Ascending aorta (tissue), 2 donors: ENCODE measurements at regions of chr6 and their contacts with region 1.

Region 1: DNA sequence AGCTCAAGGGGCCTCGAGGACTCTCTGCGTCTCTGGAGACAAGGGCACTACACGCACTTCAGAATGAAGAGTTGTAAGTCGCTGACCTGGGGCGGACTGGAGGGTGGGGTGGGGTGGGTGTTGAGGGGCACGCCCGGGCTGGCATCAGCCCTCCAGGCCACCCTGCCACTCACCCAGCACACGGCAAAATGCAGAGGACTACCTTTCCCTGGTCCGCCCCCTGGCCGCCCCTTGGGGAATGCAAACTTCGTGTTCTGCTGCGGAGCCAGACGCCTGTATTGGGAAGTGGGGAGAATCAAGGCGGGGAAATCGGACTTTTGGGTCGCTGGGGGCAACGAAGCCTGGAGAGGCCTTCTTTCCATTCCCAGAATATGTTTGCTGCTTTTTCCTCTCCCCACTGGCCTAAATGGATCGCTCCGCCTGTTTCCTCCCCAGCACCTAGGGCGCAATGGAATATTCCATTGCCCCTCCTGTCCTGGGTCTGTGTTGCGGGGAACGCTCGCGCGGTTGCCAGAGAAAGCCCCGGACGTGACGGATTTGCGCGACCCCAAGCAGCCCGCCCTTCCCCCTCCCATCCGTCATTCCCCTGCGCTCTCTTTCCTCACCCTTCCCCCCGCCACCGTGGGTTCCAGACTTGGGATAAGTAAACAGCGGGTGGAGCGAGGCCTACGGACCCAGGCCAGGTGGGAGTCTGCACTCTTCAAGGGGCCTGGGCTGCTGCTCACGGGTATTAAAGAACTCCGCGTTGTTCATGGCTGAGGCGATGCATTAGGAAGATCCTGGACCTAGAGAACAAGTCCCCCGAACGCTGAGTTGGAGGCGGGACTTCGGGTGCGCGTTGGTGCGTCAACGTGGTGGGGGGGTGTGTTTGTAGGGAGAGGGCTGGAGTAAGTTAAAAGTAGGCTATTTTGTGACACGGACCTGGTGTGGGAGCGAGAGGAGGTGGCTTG is at the start of gene PPT2:
- DNase-seq: peak; percentile 70 to 96
- H3K4me3 ChIP-seq: peak within 1 kb of the TSS; percentile 79 to 86
- H3K27ac ChIP-seq: peak within 1 kb of the TSS; percentile 90 to 96
- H3K4me1 ChIP-seq: peaks cover 12 to 27% of the 10 kb centered on the region in 2 donors
- H3K27me3 ChIP-seq: no peaks in the 10 kb centered on the region
- CTCF ChIP-seq: peak in 1 of 3 experiments; percentile 21
- total RNA-seq, gene PPT2: 839 TPM

Region 2: DNA sequence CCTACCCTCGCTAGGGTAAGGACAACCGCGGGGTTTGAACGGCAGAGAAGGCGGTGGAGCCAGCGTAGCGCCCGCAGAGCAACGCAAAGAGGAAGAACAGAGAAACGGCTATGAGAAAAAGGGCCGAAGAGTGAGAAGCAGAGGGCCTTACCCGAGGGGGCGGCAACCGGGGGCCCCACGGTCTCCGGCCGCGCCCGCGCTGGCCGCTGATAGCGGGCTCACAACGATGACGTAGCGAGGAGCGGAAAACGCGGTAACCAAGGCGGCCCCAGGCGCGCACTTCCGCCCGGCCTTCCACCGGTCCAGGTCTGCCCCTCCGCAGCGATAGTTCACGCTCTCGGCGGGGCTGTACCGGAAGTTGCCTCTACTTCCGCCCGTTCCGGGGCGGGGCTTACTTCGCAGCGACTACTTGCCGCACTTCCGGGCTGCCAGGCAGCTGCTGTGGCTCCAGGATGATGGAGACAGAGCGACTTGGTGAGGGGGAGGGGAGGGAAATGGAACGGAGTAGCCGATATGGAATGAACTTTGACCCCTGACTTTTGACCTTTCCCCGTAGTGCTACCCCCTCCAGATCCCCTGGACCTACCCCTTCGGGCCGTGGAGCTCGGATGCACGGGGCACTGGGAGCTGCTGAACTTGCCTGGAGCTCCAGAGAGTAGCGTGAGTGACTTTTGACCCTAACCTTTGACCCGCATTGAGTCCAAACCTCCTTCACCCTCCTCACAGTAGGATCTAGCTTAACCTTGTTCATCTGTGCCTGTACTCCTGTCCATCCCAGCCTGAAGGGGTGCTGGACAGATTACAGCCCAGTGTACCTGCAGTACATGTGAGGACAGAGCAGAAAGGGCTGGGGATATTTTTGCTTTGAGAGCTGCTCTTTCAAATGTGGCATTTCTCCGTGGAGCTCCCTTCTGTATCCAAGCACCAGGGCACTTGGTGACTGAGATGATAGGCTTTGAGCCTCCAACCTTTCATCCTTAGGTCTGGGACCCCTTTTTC is 194.8 kb before region 1 on chr6 and contains the starts of genes NELFE and SKIC2:
- intact Hi-C with region 1: loop called (anchors 5 kb)
- DNase-seq: peak; percentile 92 to 99
- H3K4me3 ChIP-seq: peak within 1 kb of the TSS; percentile 78 to 96
- H3K27ac ChIP-seq: peak within 1 kb of the TSS; percentile 85 to 88
- H3K4me1 ChIP-seq: peaks cover 3 to 23% of the 10 kb centered on the region in 2 donors
- H3K27me3 ChIP-seq: no peaks in the 10 kb centered on the region
- CTCF ChIP-seq: no peak
- total RNA-seq, gene NELFE: 208 TPM
- total RNA-seq, gene SKIC2: 77.4 TPM

Region 3: GRCh38 chr6:32087574-32088486 is 66.0 kb before region 1 on chr6:
- intact Hi-C with region 1: loop called (anchors 1 kb)
- DNase-seq: peak in 1 of 2 donors; percentile 94
- H3K4me3 ChIP-seq: peak overlapping the region in 1 of 2 donors; percentile 59
- H3K27ac ChIP-seq: peak overlapping the region; percentile 82 to 92
- H3K4me1 ChIP-seq: peaks cover 9 to 26% of the 10 kb centered on the region in 2 donors
- H3K27me3 ChIP-seq: no peaks in the 10 kb centered on the region
- CTCF ChIP-seq: peak; percentile 65 to 83 (median 76)

Region 4: GRCh38 chr6:32127717-32128592 is 25.9 kb before region 1 on chr6 and contains the start of gene ATF6B:
- intact Hi-C with region 1: loop called (anchors 1 kb)
- DNase-seq: peak; percentile 99 to 100
- H3K4me3 ChIP-seq: peak within 1 kb of the TSS; percentile 87 to 93
- H3K27ac ChIP-seq: peak within 1 kb of the TSS; percentile 89 to 92
- H3K4me1 ChIP-seq: peaks cover 19 to 25% of the 10 kb centered on the region in 2 donors
- H3K27me3 ChIP-seq: no peaks in the 10 kb centered on the region
- CTCF ChIP-seq: no peak
- total RNA-seq, gene ATF6B: 123 TPM

Region 5: DNA sequence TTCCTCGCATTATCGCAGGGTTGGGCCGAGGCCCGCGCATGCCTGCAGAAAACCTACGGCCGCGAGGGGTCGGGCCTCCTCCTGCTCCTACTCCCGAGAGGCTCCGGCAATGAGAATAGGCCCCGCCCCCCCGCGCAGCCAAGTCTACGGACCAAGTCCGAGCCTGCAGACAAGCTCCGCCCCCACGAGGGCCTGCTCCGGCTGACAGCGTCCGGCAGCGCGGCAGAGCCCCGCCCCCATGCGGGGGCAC is 41.7 kb after region 1 on chr6:
- intact Hi-C with region 1: loop called (anchors 1 kb)
- DNase-seq: peak; percentile 100
- H3K4me3 ChIP-seq: peak overlapping the region; percentile 78 to 88
- H3K27ac ChIP-seq: peak overlapping the region; percentile 99 to 100
- H3K4me1 ChIP-seq: peaks cover 8 to 19% of the 10 kb centered on the region in 2 donors
- H3K27me3 ChIP-seq: no peaks in the 10 kb centered on the region
- CTCF ChIP-seq: peak in 1 of 3 experiments; percentile 63

Region 6: DNA sequence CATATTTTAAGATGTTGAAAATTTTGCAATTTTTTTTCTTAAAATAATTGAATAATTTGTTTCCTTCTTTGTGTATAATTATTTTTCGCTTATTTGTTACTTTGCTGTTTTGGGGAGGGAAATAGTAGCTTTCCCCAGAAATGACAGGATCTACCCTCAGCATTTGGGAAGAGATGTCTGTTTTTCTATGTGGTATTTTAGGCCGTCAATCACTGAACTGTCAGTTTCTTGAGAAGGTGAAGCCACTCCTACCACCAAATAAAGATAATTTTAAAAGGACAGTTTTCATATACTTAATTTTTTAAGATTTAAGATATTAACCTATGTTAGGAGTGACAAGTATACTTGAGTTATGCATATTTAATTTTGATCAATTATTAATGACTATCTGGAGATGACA is 186.4 kb after region 1 on chr6:
- intact Hi-C with region 1: no loop called
- DNase-seq: no peak
- H3K4me3 ChIP-seq: no peak overlapping the region
- H3K27ac ChIP-seq: no peak overlapping the region
- H3K4me1 ChIP-seq: no peaks in the 10 kb centered on the region
- H3K27me3 ChIP-seq: no peaks in the 10 kb centered on the region
- CTCF ChIP-seq: no peak